Activated naive CD4-positive, alpha-beta T cell treated with anti-CD3 and anti-CD28 coated beads for 36 hours (primary cell): ENCODE measurements at regions of chr12 and their contacts with region 1.

Region 1: GRCh38 chr12:94269316-94269999 is 121.1 kb downstream of the PLXNC1 start:
- DNase-seq: no peak
- H3K4me3 Mint-ChIP-seq: no peak overlapping the region
- H3K27ac Mint-ChIP-seq: peak overlapping the region; percentile 30
- H3K4me1 Mint-ChIP-seq: peaks cover 46% of the 10 kb centered on the region
- H3K27me3 Mint-ChIP-seq: no peaks in the 10 kb centered on the region

Region 2: DNA sequence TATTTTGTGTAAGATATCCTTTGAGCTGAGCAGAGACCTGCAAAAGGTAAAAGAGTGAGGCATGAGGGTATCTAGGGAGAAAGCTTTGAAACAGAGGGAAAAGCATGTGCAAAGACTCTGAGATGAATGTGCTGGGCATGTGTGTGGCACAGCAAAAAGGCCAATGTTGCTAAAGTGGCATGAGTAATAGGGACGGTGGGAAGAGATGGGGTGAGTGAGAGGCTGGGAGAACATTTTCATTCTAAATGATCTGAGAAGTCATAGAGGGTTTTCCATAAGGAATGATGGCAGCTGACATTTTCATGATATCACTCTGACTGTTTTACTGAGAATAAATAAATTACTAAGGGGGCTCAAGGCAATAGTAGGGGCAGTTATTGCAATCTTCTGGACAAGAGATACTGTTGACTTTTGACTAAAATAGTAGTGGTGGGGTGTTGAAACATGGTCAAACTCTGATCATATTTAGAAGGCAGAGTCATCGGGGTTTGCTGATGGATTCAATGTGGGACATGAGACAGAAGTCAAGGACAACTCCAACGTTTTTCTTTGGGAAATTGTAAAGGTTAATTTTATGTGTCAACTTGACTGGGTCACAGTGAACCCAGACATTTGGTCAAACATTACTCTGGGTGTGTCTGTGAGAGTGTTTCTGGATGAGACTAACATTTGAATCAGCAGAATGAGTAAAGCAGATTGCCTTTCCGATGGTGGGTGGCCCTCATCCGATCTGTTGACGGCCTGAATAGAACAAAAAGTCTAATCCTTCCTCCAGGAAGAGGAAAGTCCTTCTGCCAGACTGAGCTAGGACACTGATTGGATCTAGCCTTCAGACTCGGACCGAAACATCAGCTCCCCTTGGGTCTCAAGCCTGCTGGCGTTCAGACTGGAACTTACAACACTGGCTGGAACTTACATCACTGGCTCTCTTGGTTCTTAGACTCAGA is 315.0 kb before region 1 on chr12:
- CTCF ChIA-PET with region 1: no interaction called
- intact Hi-C with region 1: no loop called
- DNase-seq: no peak
- H3K4me3 Mint-ChIP-seq: no peak overlapping the region
- H3K27ac Mint-ChIP-seq: no peak overlapping the region
- H3K4me1 Mint-ChIP-seq: peaks cover 8% of the 10 kb centered on the region
- H3K27me3 Mint-ChIP-seq: no peaks in the 10 kb centered on the region

Region 3: GRCh38 chr12:94172973-94173372 is 96.5 kb before region 1 on chr12:
- CTCF ChIA-PET with region 1: interaction called, 5 read pairs
- intact Hi-C with region 1: loop called (anchors 1 kb)
- DNase-seq: no peak
- H3K4me3 Mint-ChIP-seq: no peak overlapping the region
- H3K27ac Mint-ChIP-seq: no peak overlapping the region
- H3K4me1 Mint-ChIP-seq: peaks cover 64% of the 10 kb centered on the region
- H3K27me3 Mint-ChIP-seq: no peaks in the 10 kb centered on the region

Region 4: DNA sequence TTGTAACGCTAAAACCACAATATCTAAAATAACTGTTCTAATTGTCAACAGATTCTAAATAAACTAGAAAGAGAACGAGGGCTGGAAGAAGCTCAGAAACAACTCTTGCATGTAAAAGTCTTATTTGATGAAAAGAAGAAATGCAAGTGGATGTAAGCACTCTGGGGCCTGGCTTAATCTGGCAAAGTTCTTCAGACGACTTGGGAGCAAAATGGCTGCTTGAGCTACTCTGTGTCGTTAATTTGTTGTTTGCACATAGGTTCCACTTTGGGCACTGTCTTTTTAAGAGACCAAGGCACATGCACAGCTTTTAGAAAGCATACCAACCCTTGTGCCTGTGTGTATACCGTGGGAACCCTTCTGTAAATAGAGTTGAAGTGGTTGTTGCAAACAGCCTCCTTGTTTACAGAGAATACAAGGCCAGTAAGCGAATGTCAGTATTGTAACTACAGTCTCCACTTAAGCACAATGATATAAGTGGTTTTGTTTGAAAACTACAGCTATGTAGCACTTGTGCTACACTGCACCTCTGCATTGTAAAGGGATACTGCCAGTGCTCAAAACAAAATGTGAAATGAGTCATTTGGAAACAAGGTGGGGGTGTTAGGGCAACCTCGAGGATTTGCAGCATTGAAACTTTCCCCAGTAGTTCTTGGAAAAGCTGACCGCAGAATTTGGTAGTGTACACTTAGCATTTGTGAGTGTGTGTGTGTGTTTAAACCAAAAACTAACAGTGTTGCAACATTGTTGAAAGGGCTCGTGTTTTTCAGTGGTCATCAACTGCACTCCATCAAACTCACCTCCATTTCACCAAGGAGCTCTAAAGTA is 35.9 kb after region 1 on chr12:
- CTCF ChIA-PET with region 1: no interaction called
- intact Hi-C with region 1: loop called (anchors 2 kb)
- DNase-seq: peak; percentile 58
- H3K4me3 Mint-ChIP-seq: no peak overlapping the region
- H3K27ac Mint-ChIP-seq: no peak overlapping the region
- H3K4me1 Mint-ChIP-seq: peaks cover 18% of the 10 kb centered on the region
- H3K27me3 Mint-ChIP-seq: no peaks in the 10 kb centered on the region

Region 5: DNA sequence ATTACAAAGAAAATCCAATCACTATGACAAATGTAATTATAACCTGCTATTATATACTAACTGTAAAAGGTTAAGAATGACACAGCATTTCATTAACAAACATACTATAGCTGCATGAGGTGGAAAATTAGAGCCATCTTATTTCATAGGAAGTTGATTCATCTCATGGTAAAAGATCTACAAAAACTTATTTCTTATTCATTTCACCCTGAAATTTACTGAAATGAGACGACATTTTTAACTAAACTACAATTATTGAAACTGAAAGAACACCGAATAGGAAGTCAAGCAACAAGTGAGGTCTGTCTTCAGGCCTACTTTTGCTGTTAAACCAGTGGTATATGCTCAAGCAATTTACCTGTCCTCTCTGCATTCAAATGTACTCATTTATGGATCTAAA is 103.0 kb after region 1 on chr12:
- CTCF ChIA-PET with region 1: no interaction called
- intact Hi-C with region 1: loop called (anchors 1 kb)
- DNase-seq: peak; percentile 7
- H3K4me3 Mint-ChIP-seq: no peak overlapping the region
- H3K27ac Mint-ChIP-seq: peak overlapping the region; percentile 66
- H3K4me1 Mint-ChIP-seq: peaks cover 23% of the 10 kb centered on the region
- H3K27me3 Mint-ChIP-seq: no peaks in the 10 kb centered on the region

Region 6: DNA sequence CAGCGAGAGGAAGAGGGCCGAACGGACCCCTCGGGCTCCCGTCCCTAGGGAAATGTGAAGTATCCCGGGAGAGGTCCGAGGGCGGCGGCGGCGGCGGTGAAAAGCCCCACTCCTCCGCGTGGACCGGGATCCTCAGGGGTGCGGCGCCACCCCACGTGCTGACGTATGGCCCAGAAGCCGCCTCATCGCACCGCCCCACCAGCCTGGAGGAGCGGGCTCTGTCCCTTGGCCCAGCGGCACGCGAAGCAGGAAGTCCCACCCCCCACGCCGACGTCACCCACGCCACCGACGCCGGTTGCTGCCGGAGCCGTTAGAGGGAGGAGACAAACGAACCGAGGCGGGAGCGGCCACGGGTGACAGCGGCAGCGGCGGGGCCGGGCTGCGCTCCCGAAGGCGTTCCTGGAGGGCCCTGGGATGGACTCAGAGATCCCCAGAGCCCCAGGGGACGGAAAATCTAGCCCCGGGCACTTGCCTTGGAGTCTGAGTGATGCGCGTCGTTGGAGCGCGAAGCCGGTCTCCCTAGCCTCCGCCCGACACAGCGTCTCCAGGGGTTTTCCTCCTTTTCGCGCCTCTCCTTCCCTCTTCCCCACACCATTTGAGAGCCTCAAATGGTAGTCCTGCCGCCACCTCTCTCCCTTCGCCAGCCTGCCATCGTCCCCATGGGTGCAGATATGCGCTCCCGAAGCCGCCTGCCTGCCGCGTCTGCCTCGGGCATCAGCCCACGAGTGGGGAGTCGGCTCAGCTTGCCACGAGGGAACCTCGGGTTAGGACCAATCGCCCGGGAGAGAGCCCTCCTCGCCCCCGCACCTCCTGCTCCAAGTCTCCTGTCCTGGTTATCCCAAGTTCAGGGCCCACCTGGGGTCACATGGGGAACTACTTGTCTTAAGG is 190.5 kb after region 1 on chr12 and contains the start of gene CEP83:
- CTCF ChIA-PET with region 1: interaction called, 3 read pairs
- intact Hi-C with region 1: loop called (anchors 2 kb)
- DNase-seq: peak; percentile 98
- H3K4me3 Mint-ChIP-seq: peak within 1 kb of the TSS; percentile 97
- H3K27ac Mint-ChIP-seq: peak within 1 kb of the TSS; percentile 91
- H3K4me1 Mint-ChIP-seq: peaks cover 29% of the 10 kb centered on the region
- H3K27me3 Mint-ChIP-seq: peaks cover 5% of the 10 kb centered on the region
- total RNA-seq, gene CEP83: 19.0 to 21.5 TPM